Vagina (tissue), 2 donors: ENCODE measurements at regions of chr11 and their contacts with region 1.

Region 1: DNA sequence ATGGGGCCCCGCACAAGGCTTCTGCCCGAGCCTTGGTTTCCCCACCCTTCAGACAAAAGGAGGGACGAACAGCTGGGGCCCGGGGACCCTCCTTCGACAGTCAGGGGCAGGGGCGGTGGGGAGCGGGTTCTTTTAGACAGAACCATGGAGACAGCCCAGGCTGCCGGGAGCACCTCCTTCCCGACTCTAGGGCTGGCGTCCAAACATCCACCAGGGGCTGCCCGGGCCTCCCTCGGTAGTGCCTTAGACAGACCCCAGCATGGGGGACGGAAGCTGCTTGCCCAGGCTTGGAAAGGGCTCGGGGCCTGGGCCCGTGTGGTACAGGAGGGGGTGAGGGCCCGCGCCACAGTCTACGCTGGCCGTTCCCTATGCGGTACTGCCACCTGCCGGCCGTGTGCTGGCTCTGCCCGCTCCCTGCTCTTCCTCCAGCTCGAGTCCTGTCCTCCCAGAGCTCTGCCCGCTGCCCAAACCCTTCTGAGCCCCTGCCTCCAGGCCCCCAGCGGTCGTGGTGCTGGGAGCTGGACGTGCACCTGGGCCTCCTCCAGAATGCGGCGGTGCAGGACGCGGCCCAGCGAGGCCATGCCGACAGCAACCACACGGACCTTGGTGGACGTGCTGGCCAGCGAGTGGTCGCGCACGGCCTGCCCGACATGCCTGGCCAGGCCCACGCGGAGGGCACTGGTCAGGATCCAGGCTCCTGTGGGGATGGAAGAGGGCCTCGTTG is 20.1 kb downstream of the TSSC4 start:
- DNase-seq: no peak
- H3K4me3 ChIP-seq: no peak overlapping the region
- H3K27ac ChIP-seq: no peak overlapping the region
- H3K4me1 ChIP-seq: peaks cover 15% of the 10 kb centered on the region
- H3K27me3 ChIP-seq: no peaks in the 10 kb centered on the region
- CTCF ChIP-seq: peak; percentile 92 to 98 (median 95)
- POLR2A ChIP-seq: no peak

Region 2: GRCh38 chr11:2166091-2166851 is 254.4 kb before region 1 on chr11:
- intact Hi-C with region 1: loop called (anchors 1 kb)
- DNase-seq: no peak
- H3K4me3 ChIP-seq: peak overlapping the region; percentile 34 to 37
- H3K27ac ChIP-seq: no peak overlapping the region
- H3K4me1 ChIP-seq: peaks cover 7% of the 10 kb centered on the region
- H3K27me3 ChIP-seq: no peaks in the 10 kb centered on the region
- CTCF ChIP-seq: peak; percentile 22 to 73 (median 44)
- POLR2A ChIP-seq: no peak

Region 3: GRCh38 chr11:2196970-2197770 is 223.5 kb before region 1 on chr11:
- intact Hi-C with region 1: loop called (anchors 2 kb)
- DNase-seq: no peak
- H3K4me3 ChIP-seq: no peak overlapping the region
- H3K27ac ChIP-seq: no peak overlapping the region
- H3K4me1 ChIP-seq: no peaks in the 10 kb centered on the region
- H3K27me3 ChIP-seq: no peaks in the 10 kb centered on the region
- CTCF ChIP-seq: peak; percentile 64 to 91 (median 76)
- POLR2A ChIP-seq: no peak

Region 4: GRCh38 chr11:2892215-2893020 is 471.8 kb after region 1 on chr11:
- intact Hi-C with region 1: loop called (anchors 10 kb)
- DNase-seq: no peak
- H3K4me3 ChIP-seq: peak overlapping the region; percentile 43 to 48
- H3K27ac ChIP-seq: peak overlapping the region; percentile 82
- H3K4me1 ChIP-seq: peaks cover 30% of the 10 kb centered on the region
- H3K27me3 ChIP-seq: no peaks in the 10 kb centered on the region
- CTCF ChIP-seq: peak; percentile 83 to 99 (median 96)
- POLR2A ChIP-seq: no peak